ENCODE measurements at regions of chr20 and their contacts with region 1.

Region 1: DNA sequence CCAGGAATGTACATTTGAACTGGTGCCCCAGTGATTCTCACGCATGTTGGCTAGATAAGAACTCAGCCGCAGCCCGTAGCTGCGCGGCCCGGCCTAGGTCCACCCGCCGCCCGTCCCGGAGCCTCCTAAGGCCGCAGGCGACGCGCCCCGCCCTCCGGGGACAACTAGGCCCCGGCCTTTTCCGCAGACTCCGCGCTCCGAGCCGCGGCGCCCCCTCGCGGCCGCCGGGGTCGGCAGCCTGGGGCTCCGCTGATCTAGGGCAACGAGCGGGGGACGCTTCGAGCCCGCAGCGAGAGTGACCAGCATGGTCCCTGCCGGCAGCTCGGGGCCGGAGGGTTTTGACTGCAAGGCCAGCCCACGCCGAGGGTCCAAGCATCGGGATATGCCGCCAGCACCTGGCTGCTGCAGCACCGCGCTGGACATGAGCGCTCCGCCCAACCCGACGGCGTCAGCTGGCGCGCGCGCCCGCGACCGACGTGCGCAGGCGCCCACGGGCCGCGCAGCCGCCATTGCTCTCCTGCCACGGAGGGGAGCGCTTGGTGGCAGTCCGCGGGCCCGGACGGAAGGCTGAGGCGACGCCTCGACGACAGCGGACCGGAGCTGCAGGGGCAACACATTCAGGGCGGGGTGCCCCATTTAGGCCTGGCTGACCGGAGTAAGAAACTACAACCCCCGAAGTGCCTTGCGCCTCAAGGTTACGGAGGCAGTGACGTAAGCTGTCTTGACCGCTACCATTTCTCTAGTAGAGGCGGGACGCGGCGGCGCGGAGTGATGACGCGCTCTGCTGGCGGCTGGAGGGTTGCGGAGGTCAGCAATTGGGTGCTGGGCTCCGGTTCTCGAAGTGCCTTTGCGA is at the start of gene AP5S1:
- DNase-seq: peak; percentile 96
- ATAC-seq: peak; percentile 87
- H3K4me3 Mint-ChIP-seq: peak within 1 kb of the TSS; percentile 89
- H3K27ac Mint-ChIP-seq: peak within 1 kb of the TSS; percentile 95
- H3K4me1 Mint-ChIP-seq: peaks cover 59% of the 10 kb centered on the region
- H3K27me3 Mint-ChIP-seq: no peaks in the 10 kb centered on the region
- total RNA-seq, gene AP5S1: 13.8 to 16.5 TPM

Region 2: DNA sequence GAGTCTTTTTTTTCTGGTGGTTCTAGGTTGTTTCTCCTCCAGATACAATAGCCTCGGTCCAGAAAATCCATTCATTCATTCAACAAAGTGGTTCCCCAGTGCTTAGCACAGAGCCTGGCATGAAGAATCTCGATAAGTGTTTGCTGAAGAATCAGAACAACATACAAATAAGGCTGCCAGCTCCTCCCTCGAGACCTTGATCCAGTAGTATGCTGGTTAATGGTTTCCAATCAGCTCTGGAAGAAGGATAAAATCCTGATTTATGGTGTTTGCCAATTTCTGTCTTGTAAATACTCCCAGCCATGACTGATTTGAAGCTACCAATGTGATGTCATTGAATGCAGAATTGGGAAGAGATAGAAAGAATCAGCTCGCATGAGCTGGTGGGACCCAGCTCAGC is 84.5 kb before region 1 on chr20:
- CTCF ChIA-PET with region 1: no interaction called
- POLR2A ChIA-PET with region 1: no interaction called
- DNase-seq: no peak
- ATAC-seq: no peak
- H3K4me3 Mint-ChIP-seq: no peak overlapping the region
- H3K27ac Mint-ChIP-seq: no peak overlapping the region
- H3K4me1 Mint-ChIP-seq: no peaks in the 10 kb centered on the region
- H3K27me3 Mint-ChIP-seq: peaks cover 38% of the 10 kb centered on the region

Region 3: DNA sequence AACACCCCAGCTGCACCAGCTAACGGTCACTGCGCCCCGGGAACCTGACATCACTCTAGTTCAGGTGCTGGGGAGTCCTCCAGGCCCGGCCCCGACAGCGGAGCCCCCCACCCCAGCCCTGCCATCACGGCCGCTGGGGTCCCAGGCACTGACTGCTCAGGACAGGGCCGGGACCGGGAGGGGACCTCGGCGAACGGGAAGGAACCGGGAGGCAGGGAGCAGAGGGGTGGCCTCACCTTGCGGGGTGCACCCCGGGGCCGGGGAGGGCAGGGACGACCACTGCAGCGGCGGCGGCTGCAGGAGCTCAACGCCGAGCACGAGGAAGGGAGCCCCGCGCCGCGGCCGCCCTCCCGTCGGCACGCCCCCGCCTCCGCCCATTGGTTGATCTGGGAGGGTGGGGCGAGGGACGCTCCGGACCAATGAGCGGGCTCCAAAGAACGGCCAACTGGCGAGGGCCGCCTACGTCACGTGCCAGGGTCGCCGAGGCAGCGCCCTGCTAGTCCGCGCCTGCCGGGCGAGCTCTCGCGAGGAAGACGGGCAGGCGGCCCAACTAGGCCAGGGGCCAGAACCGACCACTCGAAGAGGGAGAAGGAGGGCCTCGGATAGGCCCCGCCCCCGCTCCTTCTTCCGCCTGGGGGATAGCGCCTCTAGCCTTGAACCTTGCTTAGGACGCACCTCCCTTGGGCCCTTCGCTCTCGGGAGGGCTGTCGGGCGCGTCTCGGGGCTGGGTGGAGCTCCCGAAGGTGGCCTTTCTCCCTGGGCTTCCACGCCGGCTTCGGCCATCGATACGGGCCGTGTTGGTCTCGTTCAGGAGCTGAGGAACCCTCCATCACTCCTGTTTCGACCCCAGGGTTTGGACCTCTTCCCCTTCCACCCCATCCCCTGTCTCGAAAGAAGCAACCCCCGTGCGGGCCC is 52.6 kb before region 1 on chr20 and contains the start of gene ADISSP:
- CTCF ChIA-PET with region 1: interaction called, 27 read pairs
- POLR2A ChIA-PET with region 1: interaction called, 13 read pairs
- DNase-seq: peak; percentile 99
- ATAC-seq: peak; percentile 95
- H3K4me3 Mint-ChIP-seq: peak within 1 kb of the TSS; percentile 89
- H3K27ac Mint-ChIP-seq: peak within 1 kb of the TSS; percentile 94
- H3K4me1 Mint-ChIP-seq: peaks cover 30% of the 10 kb centered on the region
- H3K27me3 Mint-ChIP-seq: no peaks in the 10 kb centered on the region
- total RNA-seq, gene ADISSP: 37.4 to 38.5 TPM

Region 4: GRCh38 chr20:3786665-3787323 is 33.5 kb before region 1 on chr20 and contains the start of gene CENPB:
- CTCF ChIA-PET with region 1: interaction called, 126 read pairs
- POLR2A ChIA-PET with region 1: interaction called, 44 read pairs
- DNase-seq: peak; percentile 91
- ATAC-seq: peak; percentile 94
- H3K4me3 Mint-ChIP-seq: peak within 1 kb of the TSS; percentile 81
- H3K27ac Mint-ChIP-seq: peak within 1 kb of the TSS; percentile 85
- H3K4me1 Mint-ChIP-seq: peaks cover 45% of the 10 kb centered on the region
- H3K27me3 Mint-ChIP-seq: no peaks in the 10 kb centered on the region
- total RNA-seq, gene CENPB: 87.1 to 92.0 TPM

Region 5: GRCh38 chr20:3795511-3796468 is 24.5 kb before region 1 on chr20 and contains the start of gene CDC25B:
- CTCF ChIA-PET with region 1: interaction called, 126 read pairs
- POLR2A ChIA-PET with region 1: interaction called, 44 read pairs
- DNase-seq: peak; percentile 97
- ATAC-seq: peak; percentile 79
- H3K4me3 Mint-ChIP-seq: peak within 1 kb of the TSS; percentile 93
- H3K27ac Mint-ChIP-seq: peak within 1 kb of the TSS; percentile 98
- H3K4me1 Mint-ChIP-seq: peaks cover 41% of the 10 kb centered on the region
- H3K27me3 Mint-ChIP-seq: no peaks in the 10 kb centered on the region
- total RNA-seq, gene CDC25B: 294 to 298 TPM

Region 6: DNA sequence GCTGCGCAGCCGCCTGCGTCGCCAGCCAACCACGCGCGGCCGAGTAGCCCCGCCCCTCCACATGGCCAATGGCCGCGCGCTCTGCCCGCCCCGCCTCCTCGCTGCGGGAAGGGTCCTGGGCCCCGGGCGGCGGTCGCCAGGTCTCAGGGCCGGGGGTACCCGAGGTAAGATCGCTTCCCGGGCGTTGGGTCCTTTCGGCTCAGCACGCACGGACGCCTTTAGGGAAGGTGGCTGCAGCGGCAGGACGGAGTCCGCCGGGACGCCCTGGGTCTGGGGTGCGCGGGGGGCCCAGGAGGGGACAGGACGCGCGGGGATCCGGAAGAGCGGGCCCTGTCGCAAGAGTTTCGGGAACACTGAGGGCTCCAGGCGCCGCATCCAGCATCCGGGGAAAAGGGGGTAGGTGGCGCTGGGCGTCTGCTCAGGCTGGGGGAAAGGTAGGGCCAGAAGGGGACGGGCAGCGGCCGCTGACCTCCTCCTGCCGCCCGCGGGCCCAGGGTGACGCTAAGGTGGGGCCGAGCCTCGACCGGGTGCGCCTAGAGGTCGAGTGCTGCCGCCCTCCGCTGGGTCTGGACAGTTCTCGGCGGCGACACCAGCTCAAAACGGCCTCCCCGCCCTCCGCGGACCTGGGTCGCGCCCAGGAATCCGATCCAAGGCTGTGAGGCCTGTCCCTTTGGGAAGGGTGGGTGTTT is 26.6 kb after region 1 on chr20 and contains the start of gene MAVS:
- CTCF ChIA-PET with region 1: interaction called, 14 read pairs
- POLR2A ChIA-PET with region 1: interaction called, 3 read pairs
- DNase-seq: peak; percentile 86
- ATAC-seq: peak; percentile 99
- H3K4me3 Mint-ChIP-seq: peak within 1 kb of the TSS; percentile 85
- H3K27ac Mint-ChIP-seq: peak within 1 kb of the TSS; percentile 87
- H3K4me1 Mint-ChIP-seq: peaks cover 24% of the 10 kb centered on the region
- H3K27me3 Mint-ChIP-seq: no peaks in the 10 kb centered on the region
- total RNA-seq, gene MAVS: 29.7 TPM

Region 7: GRCh38 chr20:3854462-3854871 is 34.2 kb after region 1 on chr20:
- CTCF ChIA-PET with region 1: interaction called, 27 read pairs
- POLR2A ChIA-PET with region 1: no interaction called
- DNase-seq: no peak
- ATAC-seq: peak; percentile 28
- H3K4me3 Mint-ChIP-seq: no peak overlapping the region
- H3K27ac Mint-ChIP-seq: no peak overlapping the region
- H3K4me1 Mint-ChIP-seq: peaks cover 5% of the 10 kb centered on the region
- H3K27me3 Mint-ChIP-seq: no peaks in the 10 kb centered on the region

Region 8: DNA sequence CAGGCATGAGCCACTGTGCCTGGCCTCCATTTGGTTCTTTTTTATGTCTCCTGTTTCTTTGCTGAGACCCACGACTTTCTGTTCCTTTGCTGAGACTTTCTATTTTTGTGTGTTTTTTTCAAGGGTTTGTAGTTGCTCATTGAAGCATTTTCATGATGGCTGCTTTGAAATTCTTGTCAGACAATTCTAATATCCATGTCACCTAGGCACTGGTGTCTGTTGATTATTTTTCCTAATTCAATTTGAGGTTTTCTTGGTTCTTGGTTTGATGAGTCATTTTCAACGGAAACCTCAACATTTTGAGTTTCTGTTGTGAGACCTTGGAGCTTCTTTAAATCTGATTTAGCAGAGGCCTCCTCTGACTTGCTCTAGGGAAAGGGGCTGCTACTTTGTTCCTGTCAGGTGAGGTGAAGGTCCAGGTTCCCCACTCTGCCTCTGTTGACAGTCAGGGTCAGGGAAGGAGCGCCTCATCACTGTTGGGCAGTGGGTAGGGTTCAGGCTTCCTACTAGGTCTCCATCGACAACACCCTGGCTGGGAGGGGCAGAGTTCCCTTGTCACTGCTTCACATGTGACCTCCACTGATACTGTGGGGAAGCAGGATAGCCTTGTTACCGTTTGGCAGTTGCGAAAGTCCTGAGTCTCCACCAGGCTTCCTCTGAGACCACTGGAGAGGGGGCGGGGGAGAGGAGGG is 262.3 kb after region 1 on chr20:
- CTCF ChIA-PET with region 1: interaction called, 11 read pairs
- POLR2A ChIA-PET with region 1: no interaction called
- DNase-seq: peak; percentile 76
- ATAC-seq: peak; percentile 82
- H3K4me3 Mint-ChIP-seq: peak overlapping the region; percentile 55
- H3K27ac Mint-ChIP-seq: peak overlapping the region; percentile 91
- H3K4me1 Mint-ChIP-seq: peaks cover 56% of the 10 kb centered on the region
- H3K27me3 Mint-ChIP-seq: no peaks in the 10 kb centered on the region

Measured in activated CD8-positive, alpha-beta T cell treated with anti-CD3 and anti-CD28 coated beads, Interleukin-2, amount 10 ng/mL, durations not matched to agents 7 days and 5 days (primary cell).